ENCODE measurements at regions of chr18 and their contacts with region 1.

Region 1: GRCh38 chr18:11767935-11768334 is 78.9 kb downstream of the GNAL start:
- DNase-seq: peak; percentile 91
- ATAC-seq: peak; percentile 98
- H3K4me3 ChIP-seq: no peak overlapping the region
- H3K27ac ChIP-seq: no peak overlapping the region
- H3K4me1 ChIP-seq: peaks cover 13% of the 10 kb centered on the region
- H3K27me3 ChIP-seq: no peaks in the 10 kb centered on the region
- CTCF ChIP-seq: no peak

Region 2: GRCh38 chr18:11752116-11752911 is 15.6 kb before region 1 on chr18:
- CTCF ChIA-PET with region 1: no interaction called
- POLR2A ChIA-PET with region 1: no interaction called
- intact Hi-C with region 1: loop called (anchors 2 kb)
- DNase-seq: peak; percentile 41
- ATAC-seq: peak; percentile 68
- H3K4me3 ChIP-seq: peak overlapping the region; percentile 41
- H3K27ac ChIP-seq: no peak overlapping the region
- H3K4me1 ChIP-seq: no peaks in the 10 kb centered on the region
- H3K27me3 ChIP-seq: peaks cover 75% of the 10 kb centered on the region
- CTCF ChIP-seq: no peak

Region 3: DNA sequence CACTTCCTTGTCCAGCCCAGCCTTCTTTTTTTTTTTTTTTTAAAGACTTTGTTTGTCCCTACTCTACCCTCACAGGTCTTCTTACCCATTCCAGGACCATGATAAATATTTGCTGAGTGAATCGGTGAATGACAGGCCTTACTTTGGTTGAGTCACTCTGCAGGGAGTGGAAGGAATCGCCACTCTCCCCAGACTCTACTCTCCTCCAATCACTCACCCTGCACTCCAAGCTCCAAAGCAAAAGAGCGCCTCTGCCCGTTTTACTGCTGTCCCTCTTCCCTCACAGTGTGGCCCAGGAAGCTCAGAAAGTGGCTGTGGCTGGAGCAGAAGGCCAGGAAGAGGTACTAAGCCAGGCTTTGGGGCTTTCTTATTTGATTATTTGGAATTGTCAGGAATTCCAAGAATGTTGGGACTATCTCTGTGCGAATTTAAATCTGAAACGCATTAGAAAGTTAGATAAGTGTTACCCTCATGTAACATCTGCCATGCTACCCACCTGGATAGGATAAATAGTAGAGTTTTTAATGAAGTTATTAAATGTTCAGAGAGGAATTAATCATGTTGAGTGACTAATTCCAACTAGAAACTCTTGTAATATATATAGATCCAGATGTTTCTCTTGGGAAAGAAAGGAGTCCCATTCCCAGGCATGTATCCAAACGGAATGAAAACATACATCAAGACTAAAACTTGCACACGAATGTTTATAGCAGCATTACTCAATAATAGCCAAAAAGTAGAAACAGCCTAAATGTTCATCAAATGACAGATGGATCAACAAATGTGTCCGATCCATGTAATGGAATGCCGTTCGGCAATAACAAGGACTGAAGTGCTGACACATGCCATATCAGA is 40.3 kb after region 1 on chr18:
- CTCF ChIA-PET with region 1: no interaction called
- POLR2A ChIA-PET with region 1: no interaction called
- intact Hi-C with region 1: loop called (anchors 1 kb)
- DNase-seq: peak; percentile 96
- ATAC-seq: peak; percentile 100
- H3K4me3 ChIP-seq: peak overlapping the region; percentile 36; the same call in 1 of the 2 replicates
- H3K27ac ChIP-seq: peak overlapping the region; percentile 91
- H3K4me1 ChIP-seq: peaks cover 25% of the 10 kb centered on the region
- H3K27me3 ChIP-seq: no peaks in the 10 kb centered on the region
- CTCF ChIP-seq: 0 out of 2 replicates have a peak, but pooled peaks have one; percentile 18

Region 4: GRCh38 chr18:11851146-11851805 is 83.3 kb after region 1 on chr18 and contains the start of gene CHMP1B:
- CTCF ChIA-PET with region 1: no interaction called
- POLR2A ChIA-PET with region 1: interaction called, 3 read pairs
- intact Hi-C with region 1: loop called (anchors 2 kb)
- DNase-seq: peak; percentile 97
- ATAC-seq: peak; percentile 84
- H3K4me3 ChIP-seq: peak within 1 kb of the TSS; percentile 91
- H3K27ac ChIP-seq: peak within 1 kb of the TSS; percentile 96
- H3K4me1 ChIP-seq: peaks cover 35% of the 10 kb centered on the region
- H3K27me3 ChIP-seq: no peaks in the 10 kb centered on the region
- CTCF ChIP-seq: no peak
- total RNA-seq, gene CHMP1B: 81.9 and 89.5 TPM in 2 replicates